Endothelial cell of umbilical vein (primary cell): ENCODE measurements at regions of chr1 and their contacts with region 1.

Region 1: DNA sequence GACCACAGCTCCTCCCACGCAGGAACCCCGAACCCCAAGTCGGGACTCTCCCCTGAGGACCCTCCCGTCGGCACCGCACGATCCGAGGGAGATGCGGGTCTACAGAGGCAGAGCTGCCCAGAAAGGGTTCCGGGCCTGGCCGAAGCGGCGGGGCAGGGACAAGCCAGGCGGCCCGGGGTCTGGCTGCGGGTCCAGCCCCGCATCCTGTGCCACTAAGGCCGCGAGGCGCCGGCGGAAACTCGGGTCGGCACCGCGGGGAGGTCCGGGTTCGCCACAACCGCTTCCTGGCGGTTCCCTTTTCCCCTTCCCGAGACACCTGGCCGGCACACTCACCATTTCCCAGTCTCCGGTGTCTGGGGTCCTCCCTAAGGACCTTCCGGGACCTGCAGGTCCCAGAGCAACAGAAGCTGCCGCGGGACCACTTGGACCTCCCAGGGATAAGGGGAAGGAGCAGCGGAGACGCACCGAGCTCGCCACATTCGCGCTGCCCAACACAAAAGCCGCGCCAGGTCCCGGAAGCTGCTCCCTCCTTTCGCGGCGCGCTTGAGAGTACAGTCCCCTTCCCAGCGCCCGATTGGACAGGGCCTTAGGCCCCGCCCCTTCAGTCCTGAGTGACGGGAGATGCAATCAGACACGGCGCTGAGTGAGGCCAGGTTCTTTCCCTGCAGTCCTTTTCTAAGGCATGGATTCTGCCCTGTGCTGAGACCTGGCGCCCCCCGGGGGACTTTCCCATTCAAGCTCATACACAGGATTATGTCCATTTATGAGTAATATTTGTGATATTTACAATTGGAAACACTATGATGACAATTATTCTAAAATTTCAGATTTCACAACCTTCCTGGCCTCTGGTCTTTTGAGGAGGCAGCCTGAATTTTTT is at the start of gene ZNF670:
- DNase-seq: peak; percentile 96
- H3K4me3 ChIP-seq: peak within 1 kb of the TSS; percentile 72 to 90 (median 82)
- H3K27ac ChIP-seq: peak within 1 kb of the TSS; percentile 79
- H3K4me1 ChIP-seq: peaks cover 16% of the 10 kb centered on the region
- H3K27me3 ChIP-seq: no peaks in the 10 kb centered on the region
- CTCF ChIP-seq: peak in 1 of 2 donors; percentile 7
- POLR2A ChIP-seq: peak; percentile 79
- total RNA-seq, gene ZNF670: 5.1 and 5.2 TPM in 2 replicates

Region 2: DNA sequence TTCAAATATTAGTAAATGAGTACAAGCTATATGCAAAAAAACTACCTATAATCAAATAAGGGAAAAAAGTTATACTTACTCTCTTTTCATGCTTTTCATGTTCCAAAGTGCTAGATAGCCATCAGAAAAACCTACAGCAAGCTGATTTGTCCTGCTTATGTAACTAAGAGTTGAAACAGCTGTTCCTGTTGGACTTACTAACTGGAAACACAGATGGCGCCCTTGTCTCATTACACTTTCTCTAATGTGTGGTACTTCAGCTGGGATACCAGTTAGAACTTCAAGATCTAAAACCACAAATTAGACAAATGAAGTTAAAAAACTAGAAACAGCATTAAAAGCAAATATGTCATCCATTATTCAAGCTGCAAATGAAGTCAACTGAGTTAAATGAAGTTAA is 171.0 kb before region 1 on chr1:
- CTCF ChIA-PET with region 1: interaction called, 4 read pairs
- POLR2A ChIA-PET with region 1: no interaction called
- dilution Hi-C with region 1: no loop called
- intact Hi-C with region 1: loop called (anchors 2 kb)
- DNase-seq: peak; percentile 63
- H3K4me3 ChIP-seq: no peak overlapping the region
- H3K27ac ChIP-seq: no peak overlapping the region
- H3K4me1 ChIP-seq: no peaks in the 10 kb centered on the region
- H3K27me3 ChIP-seq: no peaks in the 10 kb centered on the region
- CTCF ChIP-seq: peak; percentile 15 to 33
- POLR2A ChIP-seq: no peak

Region 3: GRCh38 chr1:247007511-247008405 is 70.7 kb before region 1 on chr1 and contains the start of gene ZNF695:
- CTCF ChIA-PET with region 1: no interaction called
- POLR2A ChIA-PET with region 1: no interaction called
- dilution Hi-C with region 1: no loop called
- intact Hi-C with region 1: loop called (anchors 1 kb)
- DNase-seq: peak; percentile 96
- H3K4me3 ChIP-seq: peak within 1 kb of the TSS; percentile 57 to 79 (median 73)
- H3K27ac ChIP-seq: peak within 1 kb of the TSS; percentile 25
- H3K4me1 ChIP-seq: no peaks in the 10 kb centered on the region
- H3K27me3 ChIP-seq: no peaks in the 10 kb centered on the region
- CTCF ChIP-seq: no peak
- POLR2A ChIP-seq: peak; percentile 25
- total RNA-seq, gene ZNF695: 4.8 and 5.5 TPM in 2 replicates

Region 4: DNA sequence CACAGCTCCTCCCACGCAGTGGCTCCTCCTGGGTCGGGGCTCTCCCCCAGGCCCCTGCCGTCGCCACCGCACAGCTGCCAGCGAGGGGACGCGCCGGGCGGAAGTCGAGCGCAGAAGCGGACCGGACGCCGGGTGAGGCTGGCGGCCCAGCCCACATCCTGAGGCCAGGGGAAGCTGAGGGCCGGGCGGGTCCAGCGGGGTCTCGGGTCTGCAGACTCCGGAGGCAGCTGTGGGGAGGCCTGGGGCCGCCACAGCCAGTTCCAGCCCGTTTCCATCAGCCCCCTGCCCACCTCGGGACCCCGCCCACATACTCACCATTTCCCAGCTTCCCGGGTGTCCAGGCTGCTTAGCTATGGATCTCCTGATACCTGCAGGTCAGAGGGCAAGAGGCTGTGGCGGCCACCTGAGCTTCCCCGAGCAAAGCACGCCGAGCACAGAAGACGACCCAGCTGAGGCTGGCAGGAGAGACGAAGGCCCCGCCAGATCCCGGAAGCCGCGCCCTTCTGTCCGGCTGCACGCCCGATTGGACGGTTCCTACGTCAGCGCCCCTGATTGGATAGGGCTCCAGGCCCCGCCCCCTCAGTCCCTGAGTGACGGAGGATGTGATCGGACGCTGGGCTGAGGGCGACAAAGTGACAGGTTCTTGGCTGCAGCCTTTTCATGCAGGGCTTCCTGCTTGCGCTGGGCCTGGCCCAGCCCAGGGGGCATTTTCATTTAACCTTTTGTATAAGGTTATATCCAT is 132.0 kb after region 1 on chr1:
- CTCF ChIA-PET with region 1: no interaction called
- POLR2A ChIA-PET with region 1: no interaction called
- dilution Hi-C with region 1: no loop called
- intact Hi-C with region 1: loop called (anchors 1 kb)
- DNase-seq: peak; percentile 92
- H3K4me3 ChIP-seq: peak overlapping the region; percentile 72 to 90 (median 81)
- H3K27ac ChIP-seq: peak overlapping the region; percentile 92
- H3K4me1 ChIP-seq: peaks cover 10% of the 10 kb centered on the region
- H3K27me3 ChIP-seq: peaks cover 0 to 18% of the 10 kb centered on the region in 2 experiments
- CTCF ChIP-seq: no peak
- POLR2A ChIP-seq: peak; percentile 84

Region 5: GRCh38 chr1:247471445-247472016 is 393.0 kb after region 1 on chr1:
- CTCF ChIA-PET with region 1: no interaction called
- POLR2A ChIA-PET with region 1: no interaction called
- dilution Hi-C with region 1: no loop called
- intact Hi-C with region 1: no loop called
- DNase-seq: no peak
- H3K4me3 ChIP-seq: no peak overlapping the region
- H3K27ac ChIP-seq: no peak overlapping the region
- H3K4me1 ChIP-seq: no peaks in the 10 kb centered on the region
- H3K27me3 ChIP-seq: no peaks in the 10 kb centered on the region
- CTCF ChIP-seq: no peak
- POLR2A ChIP-seq: no peak